ENCODE measurements at regions of chr10 and their contacts with region 1.

Region 1: GRCh38 chr10:75111367-75111906 is at the start of gene SAMD8:
- DNase-seq: peak; percentile 99
- ATAC-seq: peak; percentile 93
- total RNA-seq, gene SAMD8: 21.9 TPM

Region 2: GRCh38 chr10:75165684-75166622 is 54.5 kb after region 1 on chr10:
- intact Hi-C with region 1: loop called (anchors 5 kb)
- DNase-seq: no peak
- ATAC-seq: no peak

Region 3: DNA sequence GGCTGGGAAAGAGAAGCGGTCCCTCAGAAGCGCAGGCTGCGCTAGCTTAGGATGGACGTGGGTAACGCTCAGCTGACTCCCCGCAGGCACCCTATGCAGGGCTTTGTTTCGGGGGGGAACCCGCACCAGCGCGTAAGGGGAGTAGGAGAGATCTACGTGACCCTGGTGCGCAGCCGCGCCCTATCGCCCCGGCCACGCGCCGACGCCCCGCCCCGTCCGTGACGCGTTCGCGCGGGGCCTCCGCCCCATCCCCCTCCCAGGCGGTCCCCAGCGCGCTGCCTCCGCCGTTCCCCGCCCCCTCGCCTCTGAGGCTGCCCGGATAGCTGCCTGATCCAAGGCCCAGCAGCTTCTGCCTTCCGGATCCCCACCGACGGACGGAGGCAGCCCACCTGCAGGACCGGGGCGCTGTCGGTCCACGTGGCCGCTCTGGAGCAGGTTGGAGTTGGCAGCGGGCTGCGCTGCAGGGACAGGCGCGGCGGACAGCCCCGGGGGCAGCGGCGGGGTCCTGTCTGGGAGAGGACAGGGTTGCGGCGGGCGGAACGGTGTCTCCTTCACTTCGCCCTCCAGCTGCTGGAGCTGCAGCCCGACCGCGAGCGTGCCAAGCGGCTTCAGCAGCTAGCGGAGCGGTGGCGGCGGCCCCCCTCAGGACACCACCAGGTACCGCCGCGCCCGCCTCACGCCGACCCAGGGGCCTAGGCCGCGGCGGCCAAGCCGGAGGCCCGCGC is 99.0 kb after region 1 on chr10 and contains the start of gene VDAC2:
- intact Hi-C with region 1: loop called (anchors 2 kb)
- DNase-seq: peak; percentile 95
- ATAC-seq: peak; percentile 98
- total RNA-seq, gene VDAC2: 470 TPM

Region 4: DNA sequence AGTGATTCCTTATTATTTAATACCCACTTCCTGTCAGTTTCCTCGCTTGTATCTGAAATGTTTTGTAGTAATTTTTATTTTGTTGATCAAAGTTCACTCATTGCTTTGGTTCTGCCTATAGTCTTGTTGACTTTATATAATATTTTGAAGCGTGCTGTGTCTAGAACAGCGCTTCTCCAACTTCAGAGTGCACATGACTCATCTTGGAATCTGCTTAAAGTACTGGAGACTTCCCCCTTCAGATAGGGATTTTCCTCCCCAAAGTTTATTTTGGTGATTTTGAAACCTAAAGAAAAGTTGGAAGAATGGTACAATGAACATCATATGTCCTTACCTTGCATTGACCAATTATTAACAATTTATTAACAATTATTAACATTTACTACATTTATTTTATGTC is 118.5 kb after region 1 on chr10:
- intact Hi-C with region 1: loop called (anchors 2 kb)
- DNase-seq: no peak
- ATAC-seq: no peak

Measured in Right ventricle myocardium inferior (tissue), 1 donor.